PC-3 (cell line): ENCODE measurements at regions of chr3 and their contacts with region 1.

Region 1: GRCh38 chr3:185733980-185734724 is 90.7 kb downstream of the IGF2BP2 start:
- DNase-seq: peak; percentile 91
- ATAC-seq: peak; percentile 39
- H3K4me3 ChIP-seq: no peak overlapping the region
- H3K27ac ChIP-seq: peak overlapping the region; percentile 100
- H3K4me1 ChIP-seq: peaks cover 90% of the 10 kb centered on the region
- H3K27me3 ChIP-seq: no peaks in the 10 kb centered on the region
- CTCF ChIP-seq: peak; percentile 86

Region 2: DNA sequence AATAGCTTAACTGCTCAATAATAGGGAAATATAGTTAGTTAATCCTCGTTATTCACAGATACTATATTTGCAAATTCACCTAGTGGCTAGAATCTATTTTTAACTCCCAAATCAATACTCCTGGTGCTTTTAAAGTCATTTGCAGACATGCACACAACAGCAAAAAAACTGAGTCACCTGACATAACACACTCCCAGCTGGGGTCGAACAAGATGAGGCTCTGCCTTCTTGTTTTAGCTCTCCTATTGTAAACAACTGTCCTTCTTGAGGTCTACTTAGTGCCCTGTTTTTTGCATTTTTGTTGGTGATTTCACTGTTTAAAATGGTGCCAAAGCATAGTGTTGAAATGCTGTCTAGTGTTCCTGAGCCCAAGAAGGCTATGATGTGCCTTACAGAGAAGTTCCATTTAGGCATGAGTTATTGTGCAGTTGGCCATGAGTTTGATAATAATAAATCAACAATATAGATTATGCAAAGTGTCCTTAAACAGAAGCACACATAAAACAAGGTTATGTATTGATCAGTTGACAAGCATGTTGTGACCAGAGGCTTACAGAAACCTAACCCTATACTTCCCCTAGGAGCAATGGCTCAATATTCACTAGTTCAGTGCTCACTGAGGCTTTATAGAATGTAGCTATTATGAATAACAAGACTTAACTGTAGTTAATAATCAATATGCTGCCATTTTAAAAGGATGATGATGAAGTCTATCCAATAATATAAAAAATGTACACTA is 352.7 kb before region 1 on chr3:
- CTCF ChIA-PET with region 1: no interaction called
- POLR2A ChIA-PET with region 1: no interaction called
- intact Hi-C with region 1: no loop called
- DNase-seq: no peak
- ATAC-seq: no peak
- H3K4me3 ChIP-seq: no peak overlapping the region
- H3K27ac ChIP-seq: no peak overlapping the region
- H3K4me1 ChIP-seq: no peaks in the 10 kb centered on the region
- H3K27me3 ChIP-seq: no peaks in the 10 kb centered on the region
- CTCF ChIP-seq: no peak

Region 3: DNA sequence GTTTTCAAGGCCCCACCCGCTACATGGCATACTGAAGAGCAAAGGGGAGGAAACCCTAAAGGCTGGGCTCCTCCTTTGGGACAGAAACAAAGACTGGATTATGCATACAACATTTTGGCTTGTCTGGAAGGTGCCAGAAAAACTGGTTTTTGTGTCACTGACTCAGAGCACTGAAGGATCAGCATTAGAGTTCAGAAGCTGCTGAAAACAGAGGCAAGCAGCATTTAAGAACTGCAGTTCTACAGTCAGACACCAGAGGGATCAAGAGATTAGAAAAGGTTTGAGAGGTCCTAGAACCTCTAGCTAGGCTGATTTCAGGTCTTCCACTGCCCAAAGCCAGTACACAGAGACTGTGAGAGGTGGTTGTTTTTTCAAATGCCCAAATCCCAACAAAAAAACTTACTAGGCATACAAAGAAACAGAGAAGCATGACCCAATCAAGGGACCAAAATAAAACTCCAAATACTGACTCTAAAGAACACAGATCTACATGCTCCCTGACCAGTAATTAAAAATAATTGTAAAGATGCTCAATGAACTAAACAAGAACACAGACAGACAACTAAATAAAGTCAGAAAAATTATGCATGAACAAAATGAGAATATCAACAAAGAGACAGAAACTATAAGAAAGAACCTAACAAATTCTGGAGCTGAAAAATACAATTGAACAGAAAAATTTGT is 56.9 kb before region 1 on chr3:
- CTCF ChIA-PET with region 1: no interaction called
- POLR2A ChIA-PET with region 1: no interaction called
- intact Hi-C with region 1: loop called (anchors 2 kb)
- DNase-seq: peak; percentile 98
- ATAC-seq: peak; percentile 94
- H3K4me3 ChIP-seq: no peak overlapping the region
- H3K27ac ChIP-seq: peak overlapping the region; percentile 38
- H3K4me1 ChIP-seq: no peaks in the 10 kb centered on the region
- H3K27me3 ChIP-seq: no peaks in the 10 kb centered on the region
- CTCF ChIP-seq: peak; percentile 89

Region 4: GRCh38 chr3:185687271-185687878 is 46.8 kb before region 1 on chr3:
- CTCF ChIA-PET with region 1: interaction called, 3 read pairs
- POLR2A ChIA-PET with region 1: no interaction called
- intact Hi-C with region 1: loop called (anchors 1 kb)
- DNase-seq: peak; percentile 72
- ATAC-seq: no peak
- H3K4me3 ChIP-seq: no peak overlapping the region
- H3K27ac ChIP-seq: peak overlapping the region; percentile 96
- H3K4me1 ChIP-seq: peaks cover 54% of the 10 kb centered on the region
- H3K27me3 ChIP-seq: no peaks in the 10 kb centered on the region
- CTCF ChIP-seq: no peak

Region 5: DNA sequence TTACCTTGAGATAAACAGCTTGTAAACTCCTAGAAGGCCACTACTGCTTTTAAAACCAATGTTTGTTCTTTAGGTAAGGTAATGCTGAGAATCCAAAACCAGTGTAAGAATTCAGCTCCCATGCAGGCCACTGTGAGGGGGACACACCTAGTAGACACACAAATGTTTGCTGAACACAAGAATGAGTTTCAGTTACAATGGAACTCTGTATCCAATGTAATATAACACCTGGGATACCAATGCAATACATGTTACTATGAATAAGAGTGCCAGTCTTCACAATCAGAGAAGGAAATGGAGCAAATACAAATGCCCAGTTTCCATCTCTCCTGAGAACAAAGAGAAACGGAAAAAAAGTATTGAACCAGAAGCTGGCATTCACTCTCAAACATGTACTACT is 24.8 kb after region 1 on chr3:
- CTCF ChIA-PET with region 1: interaction called, 3 read pairs
- POLR2A ChIA-PET with region 1: no interaction called
- intact Hi-C with region 1: loop called (anchors 1 kb)
- DNase-seq: peak; percentile 80
- ATAC-seq: peak; percentile 89
- H3K4me3 ChIP-seq: no peak overlapping the region
- H3K27ac ChIP-seq: peak overlapping the region; percentile 74
- H3K4me1 ChIP-seq: peaks cover 49% of the 10 kb centered on the region
- H3K27me3 ChIP-seq: no peaks in the 10 kb centered on the region
- CTCF ChIP-seq: no peak

Region 6: DNA sequence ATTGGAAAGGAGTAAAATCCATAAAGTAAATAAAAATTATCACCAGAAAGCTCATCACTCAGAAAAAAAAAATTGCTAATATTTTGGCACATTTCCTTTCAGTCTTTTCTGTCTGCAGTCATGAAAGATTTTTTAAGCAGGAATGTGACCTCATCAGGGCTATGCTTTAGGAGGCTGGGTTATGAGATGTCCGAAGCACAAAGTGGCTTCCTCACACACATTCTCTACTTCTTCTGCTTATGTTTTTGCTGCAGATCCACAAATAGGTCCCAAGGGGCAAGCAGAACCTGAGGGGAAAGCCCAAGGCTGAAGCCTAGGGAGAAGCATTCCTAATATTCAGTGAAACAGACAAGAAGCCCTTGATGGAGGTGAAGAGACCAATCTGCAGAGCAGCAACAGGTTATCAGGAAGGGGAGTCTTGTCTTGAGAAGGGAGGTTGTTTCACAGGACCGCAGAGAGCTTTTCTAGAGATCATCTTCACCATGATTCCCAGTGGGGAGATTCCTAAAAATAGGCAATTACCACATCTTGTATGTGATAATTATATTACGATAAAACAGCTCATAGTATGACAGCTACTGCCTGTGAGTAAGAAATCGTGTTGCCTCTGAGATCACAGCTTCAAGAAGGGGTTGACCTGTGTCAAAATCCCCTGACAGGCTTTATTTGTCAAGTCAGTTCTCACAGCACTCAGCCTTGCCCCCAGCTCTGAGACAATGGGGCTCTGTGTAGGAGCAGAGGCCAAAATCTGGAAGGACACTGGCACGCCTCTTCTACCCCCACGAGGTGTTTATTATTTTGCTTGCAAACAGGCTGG is 30.2 kb after region 1 on chr3:
- CTCF ChIA-PET with region 1: interaction called, 15 read pairs
- POLR2A ChIA-PET with region 1: interaction called, 8 read pairs
- intact Hi-C with region 1: loop called (anchors 1 kb)
- DNase-seq: no peak
- ATAC-seq: no peak
- H3K4me3 ChIP-seq: no peak overlapping the region
- H3K27ac ChIP-seq: no peak overlapping the region
- H3K4me1 ChIP-seq: peaks cover 43% of the 10 kb centered on the region
- H3K27me3 ChIP-seq: no peaks in the 10 kb centered on the region
- CTCF ChIP-seq: no peak

Region 7: DNA sequence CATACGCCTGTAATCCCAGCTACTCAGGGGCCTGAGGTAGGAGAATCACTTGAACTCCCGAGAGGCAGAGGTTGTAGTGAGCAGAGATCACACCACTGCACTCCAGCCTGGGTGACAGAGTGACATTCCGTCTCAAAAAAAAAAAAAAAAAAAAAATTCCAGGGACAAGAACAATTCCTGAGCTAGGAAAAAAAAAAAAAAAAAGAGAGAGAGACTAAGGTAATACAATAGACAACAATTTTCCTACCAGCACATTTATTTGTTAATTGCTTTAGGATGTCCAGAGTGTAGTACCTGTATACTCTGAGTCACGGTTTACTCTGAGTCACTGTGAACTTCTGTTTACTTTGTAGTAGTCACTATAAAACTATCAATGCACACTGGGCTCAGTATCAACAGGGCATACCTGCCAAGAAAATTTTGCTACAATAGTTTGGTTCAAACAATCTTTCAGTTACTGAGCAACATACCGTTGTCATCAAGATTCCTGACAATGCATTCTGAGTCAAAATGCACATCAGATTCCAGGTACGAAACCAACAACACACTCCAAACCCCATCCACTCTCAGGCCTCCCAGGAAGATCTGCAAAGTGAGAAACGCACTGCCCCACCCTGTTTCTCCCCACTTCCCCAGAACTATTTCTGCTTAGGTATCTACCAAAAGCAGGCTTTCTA is 62.4 kb after region 1 on chr3:
- CTCF ChIA-PET with region 1: interaction called, 4 read pairs
- POLR2A ChIA-PET with region 1: interaction called, 10 read pairs
- intact Hi-C with region 1: loop called (anchors 1 kb)
- DNase-seq: peak; percentile 100
- ATAC-seq: peak; percentile 88
- H3K4me3 ChIP-seq: peak overlapping the region; percentile 23; the same call in 1 of the 2 replicates
- H3K27ac ChIP-seq: peak overlapping the region; percentile 95
- H3K4me1 ChIP-seq: peaks cover 49% of the 10 kb centered on the region
- H3K27me3 ChIP-seq: no peaks in the 10 kb centered on the region
- CTCF ChIP-seq: no peak

Region 8: GRCh38 chr3:185929192-185930151 is 195.3 kb after region 1 on chr3:
- CTCF ChIA-PET with region 1: no interaction called
- POLR2A ChIA-PET with region 1: no interaction called
- intact Hi-C with region 1: loop called (anchors 5 kb)
- DNase-seq: no peak
- ATAC-seq: peak; percentile 25
- H3K4me3 ChIP-seq: 0 out of 2 replicates have a peak overlapping the region, but pooled peaks have one; percentile 0
- H3K27ac ChIP-seq: no peak overlapping the region
- H3K4me1 ChIP-seq: peaks cover 71% of the 10 kb centered on the region
- H3K27me3 ChIP-seq: no peaks in the 10 kb centered on the region
- CTCF ChIP-seq: no peak